Mucosa of descending colon (tissue), 3 donors: ENCODE measurements at regions of chr5 and their contacts with region 1.

Region 1: GRCh38 chr5:170278611-170279452 is 18.7 kb downstream of the LCP2 start:
- DNase-seq: peak; percentile 57 to 87 (median 70)
- ATAC-seq: peak; percentile 83
- H3K4me3 ChIP-seq: no peak overlapping the region
- H3K4me1 ChIP-seq: peaks cover 7% of the 10 kb centered on the region
- CTCF ChIP-seq: no peak

Region 2: GRCh38 chr5:170173235-170173634 is 105.6 kb before region 1 on chr5:
- intact Hi-C with region 1: no loop called
- DNase-seq: no peak
- ATAC-seq: no peak
- H3K4me3 ChIP-seq: no peak overlapping the region
- H3K4me1 ChIP-seq: no peaks in the 10 kb centered on the region
- CTCF ChIP-seq: no peak

Region 3: GRCh38 chr5:170338933-170339779 is 60.3 kb after region 1 on chr5:
- intact Hi-C with region 1: loop called in 1 of 2 experiments (anchors 10 kb)
- DNase-seq: peak in 2 of 3 donors; percentile 38 to 57
- ATAC-seq: peak; percentile 75
- H3K4me3 ChIP-seq: no peak overlapping the region
- H3K4me1 ChIP-seq: no peaks in the 10 kb centered on the region
- CTCF ChIP-seq: no peak

Region 4: GRCh38 chr5:170420780-170421412 is 142.1 kb after region 1 on chr5:
- intact Hi-C with region 1: loop called in 1 of 2 experiments (anchors 10 kb)
- DNase-seq: peak in 1 of 3 donors; percentile 77
- ATAC-seq: peak; percentile 58
- H3K4me3 ChIP-seq: no peak overlapping the region
- H3K4me1 ChIP-seq: no peaks in the 10 kb centered on the region
- CTCF ChIP-seq: peak; percentile 40

Region 5: DNA sequence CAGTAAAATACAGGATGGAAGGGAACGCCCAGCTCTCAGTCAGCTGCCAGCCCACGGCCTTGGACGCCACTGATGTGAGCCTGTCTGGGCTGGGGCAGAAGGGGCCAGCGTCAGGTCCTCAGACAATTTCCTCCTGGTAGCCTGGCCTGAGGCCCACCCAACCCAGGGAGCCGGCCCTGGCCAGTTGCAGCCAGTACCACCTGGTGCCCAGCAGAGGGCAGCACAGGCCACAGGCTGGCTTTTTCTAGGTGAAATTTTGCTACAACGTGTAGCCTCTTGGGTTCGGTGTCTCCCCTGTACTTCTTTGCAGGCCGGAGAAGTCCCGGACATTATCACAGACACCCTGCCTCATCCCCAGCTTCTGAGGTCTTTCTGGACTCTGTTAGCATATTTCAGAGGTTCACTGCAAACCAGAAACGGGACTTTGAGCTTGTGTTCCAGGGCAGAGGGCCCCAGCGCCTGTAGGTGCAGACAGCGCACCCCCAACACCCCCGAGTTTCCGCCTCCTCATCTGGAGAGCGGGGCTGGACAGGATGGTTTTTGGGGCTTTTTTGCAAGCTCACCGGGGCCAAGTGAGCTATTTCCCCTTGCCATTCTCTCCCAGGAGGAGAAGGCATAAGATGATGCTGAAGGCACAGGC is 156.3 kb after region 1 on chr5:
- intact Hi-C with region 1: no loop called
- DNase-seq: peak in 2 of 3 donors; percentile 62 to 66
- ATAC-seq: peak; percentile 88
- H3K4me3 ChIP-seq: no peak overlapping the region
- H3K4me1 ChIP-seq: no peaks in the 10 kb centered on the region
- CTCF ChIP-seq: peak; percentile 90

Region 6: GRCh38 chr5:170655476-170655875 is 376.6 kb after region 1 on chr5:
- intact Hi-C with region 1: no loop called
- DNase-seq: no peak
- ATAC-seq: no peak
- H3K4me3 ChIP-seq: no peak overlapping the region
- H3K4me1 ChIP-seq: no peaks in the 10 kb centered on the region
- CTCF ChIP-seq: no peak